K562 (cell line): ENCODE measurements at regions of chr12 and their contacts with region 1.

Region 1: GRCh38 chr12:95217377-95218149 is at the starts of genes FGD6 and VEZT:
- DNase-seq: peak; percentile 96 to 98 (median 97)
- ATAC-seq: peak; percentile 93
- H3K4me3 ChIP-seq: peak within 1 kb of the TSS; percentile 70
- H3K27ac ChIP-seq: peak within 1 kb of the TSS; percentile 81
- H3K4me1 ChIP-seq: peaks cover 8 to 14% of the 10 kb centered on the region in 2 experiments
- H3K27me3 ChIP-seq: no peaks in the 10 kb centered on the region
- CTCF ChIP-seq: peak; percentile 78 to 94 (median 82)
- EP300 ChIP-seq: no peak
- POLR2A ChIP-seq: peak; percentile 85
- RAD21 ChIP-seq: peak; percentile 90 to 99
- polyA plus RNA-seq, gene FGD6: 1.5 to 2.1 TPM
- polyA plus RNA-seq, gene VEZT: 16.1 to 29.1 TPM

Region 2: DNA sequence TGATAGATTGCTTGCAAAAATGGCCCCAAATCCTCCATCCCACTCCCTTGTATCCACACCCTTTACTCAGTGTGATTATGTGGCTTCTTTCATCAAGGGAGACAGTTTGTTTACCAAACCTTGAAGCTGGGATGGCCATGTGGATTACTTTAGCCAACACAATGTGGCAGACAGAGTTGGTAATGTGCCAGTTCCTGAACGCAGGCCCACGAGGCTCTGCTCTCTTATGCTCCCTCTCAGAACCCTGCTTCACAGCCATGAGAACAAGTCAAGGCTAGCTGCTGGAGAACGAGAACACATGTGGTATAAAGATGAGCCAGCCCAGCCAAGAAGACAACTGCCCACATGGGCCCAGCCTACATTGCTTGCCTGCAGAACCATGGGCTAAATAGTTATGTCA is 376.4 kb before region 1 on chr12:
- CTCF ChIA-PET with region 1: no interaction called
- POLR2A ChIA-PET with region 1: no interaction called
- in situ Hi-C with region 1: no loop called
- intact Hi-C with region 1: no loop called
- DNase-seq: no peak
- ATAC-seq: no peak
- H3K4me3 ChIP-seq: no peak overlapping the region
- H3K27ac ChIP-seq: no peak overlapping the region
- H3K4me1 ChIP-seq: no peaks in the 10 kb centered on the region
- H3K27me3 ChIP-seq: peaks cover 12 to 34% of the 10 kb centered on the region in 2 experiments
- CTCF ChIP-seq: no peak
- EP300 ChIP-seq: no peak
- POLR2A ChIP-seq: no peak
- RAD21 ChIP-seq: no peak

Region 3: DNA sequence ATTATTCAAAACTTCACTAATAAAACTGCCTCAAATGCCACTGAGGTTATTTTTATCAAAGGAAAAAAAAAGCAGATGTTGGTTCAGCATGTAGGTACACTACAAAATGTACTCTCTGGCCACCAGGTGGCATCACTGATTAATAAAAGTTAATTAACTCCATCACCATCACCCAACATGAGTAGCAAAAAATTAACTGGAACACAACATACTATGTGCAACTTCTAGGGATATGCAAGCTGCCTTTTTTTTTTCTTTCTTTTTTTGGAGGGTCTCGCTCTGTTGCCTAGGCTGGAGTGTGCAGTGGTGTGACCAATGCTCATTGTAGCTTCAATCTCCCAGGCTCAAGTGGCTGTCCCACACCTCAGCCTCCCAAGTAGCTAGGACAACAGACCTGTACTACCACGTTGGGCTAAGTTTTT is 100.4 kb before region 1 on chr12:
- CTCF ChIA-PET with region 1: interaction called, 32 read pairs
- POLR2A ChIA-PET with region 1: no interaction called
- in situ Hi-C with region 1: no loop called
- intact Hi-C with region 1: loop called (anchors 1 kb)
- DNase-seq: peak; percentile 54 to 84 (median 60)
- ATAC-seq: peak; percentile 97
- H3K4me3 ChIP-seq: no peak overlapping the region
- H3K27ac ChIP-seq: no peak overlapping the region
- H3K4me1 ChIP-seq: no peaks in the 10 kb centered on the region; a peak in 1 of 5 replicates
- H3K27me3 ChIP-seq: no peaks in the 10 kb centered on the region
- CTCF ChIP-seq: peak; percentile 52 to 78 (median 66); a peak in 5 of 6 replicates
- EP300 ChIP-seq: no peak
- POLR2A ChIP-seq: no peak
- RAD21 ChIP-seq: peak; percentile 94 to 97

Region 4: DNA sequence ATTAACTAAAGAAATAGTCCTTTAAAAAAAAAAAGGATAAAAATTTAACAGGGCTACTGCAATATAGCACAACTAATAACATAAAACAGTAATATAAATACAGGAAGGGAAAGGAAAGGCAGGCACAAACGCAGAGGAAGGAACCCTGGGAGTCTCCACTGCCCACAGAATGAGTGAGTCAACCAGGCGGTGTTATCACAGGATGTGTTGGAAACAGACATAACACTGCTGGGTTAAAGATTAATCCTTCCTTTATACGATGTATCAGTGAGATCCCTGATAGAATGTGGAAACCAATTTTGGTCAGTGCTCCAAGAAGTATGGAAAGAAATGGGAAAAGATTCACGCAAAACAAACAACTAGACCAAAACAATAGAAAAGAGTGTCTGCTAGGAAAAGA is 48.2 kb before region 1 on chr12:
- CTCF ChIA-PET with region 1: no interaction called
- POLR2A ChIA-PET with region 1: interaction called, 4 read pairs
- in situ Hi-C with region 1: no loop called
- intact Hi-C with region 1: loop called (anchors 10 kb)
- DNase-seq: peak; percentile 32 to 72 (median 44)
- ATAC-seq: peak; percentile 77
- H3K4me3 ChIP-seq: no peak overlapping the region
- H3K27ac ChIP-seq: peak overlapping the region; percentile 42; the same call in 2 of the 3 replicates
- H3K4me1 ChIP-seq: peaks cover 10 to 28% of the 10 kb centered on the region in 2 experiments; a peak in 3 of 5 replicates
- H3K27me3 ChIP-seq: no peaks in the 10 kb centered on the region
- CTCF ChIP-seq: no peak
- EP300 ChIP-seq: peak; percentile 62; the same call in 1 of the 2 replicates
- POLR2A ChIP-seq: no peak
- RAD21 ChIP-seq: no peak

Region 5: DNA sequence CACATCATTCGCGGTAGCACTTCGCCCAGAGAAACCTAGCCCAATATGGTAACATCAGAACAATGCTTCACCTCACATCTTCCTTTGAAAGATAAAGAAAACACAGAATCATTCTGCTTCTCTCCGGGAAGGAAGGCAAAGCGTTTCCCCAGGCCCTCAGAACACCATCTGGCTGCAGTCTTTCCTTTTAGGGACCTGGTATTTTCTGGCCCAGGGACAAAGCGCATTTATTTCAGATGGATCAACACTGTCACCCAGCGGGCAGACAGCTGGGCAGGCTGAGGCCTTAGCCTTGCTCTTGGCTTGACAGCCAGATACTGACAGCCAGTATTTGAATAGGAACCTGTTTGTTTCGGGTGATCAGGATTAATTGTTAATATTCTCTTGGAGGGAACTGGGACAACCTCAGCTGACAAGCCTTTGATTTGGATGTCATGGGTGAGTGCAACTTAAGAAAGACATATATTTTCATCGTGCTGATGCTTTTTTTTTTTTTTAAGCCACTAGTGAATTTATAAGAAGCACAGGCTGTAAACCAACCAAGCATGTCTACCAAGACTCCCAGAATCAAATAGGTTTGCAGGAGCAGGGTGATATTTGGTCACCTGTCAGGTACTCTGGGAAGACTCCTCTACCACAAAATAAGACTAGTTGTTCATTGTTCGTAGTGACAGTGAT is 119.0 kb after region 1 on chr12:
- CTCF ChIA-PET with region 1: no interaction called
- POLR2A ChIA-PET with region 1: no interaction called
- in situ Hi-C with region 1: no loop called
- intact Hi-C with region 1: loop called (anchors 5 kb)
- DNase-seq: peak in 3 of 4 experiments; percentile 10 to 57 (median 40)
- ATAC-seq: peak; percentile 87
- H3K4me3 ChIP-seq: no peak overlapping the region
- H3K27ac ChIP-seq: no peak overlapping the region
- H3K4me1 ChIP-seq: no peaks in the 10 kb centered on the region
- H3K27me3 ChIP-seq: peaks cover 5 to 10% of the 10 kb centered on the region in 2 experiments; a peak in 3 of 5 replicates
- CTCF ChIP-seq: peak; percentile 65 to 76 (median 73)
- EP300 ChIP-seq: no peak
- POLR2A ChIP-seq: no peak
- RAD21 ChIP-seq: peak; percentile 54 to 84

Region 6: GRCh38 chr12:95351748-95352147 is 134.2 kb after region 1 on chr12:
- CTCF ChIA-PET with region 1: no interaction called
- POLR2A ChIA-PET with region 1: no interaction called
- in situ Hi-C with region 1: no loop called
- intact Hi-C with region 1: no loop called
- DNase-seq: peak in 1 of 4 experiments; percentile 29
- ATAC-seq: peak; percentile 88
- H3K4me3 ChIP-seq: no peak overlapping the region
- H3K27ac ChIP-seq: no peak overlapping the region
- H3K4me1 ChIP-seq: no peaks in the 10 kb centered on the region; a peak in 1 of 5 replicates
- H3K27me3 ChIP-seq: peaks cover 26 to 37% of the 10 kb centered on the region in 2 experiments
- CTCF ChIP-seq: peak in 2 of 3 experiments; percentile 12 to 27; a peak in 1 of 6 replicates
- EP300 ChIP-seq: no peak
- POLR2A ChIP-seq: no peak
- RAD21 ChIP-seq: peak; percentile 22 to 44; a peak in 3 of 4 replicates

Region 7: GRCh38 chr12:95532851-95533250 is 315.3 kb after region 1 on chr12:
- CTCF ChIA-PET with region 1: interaction called, 3 read pairs
- POLR2A ChIA-PET with region 1: no interaction called
- in situ Hi-C with region 1: no loop called
- intact Hi-C with region 1: loop called (anchors 2 kb)
- DNase-seq: no peak
- ATAC-seq: peak; percentile 38; the same call in 1 of the 3 replicates
- H3K4me3 ChIP-seq: no peak overlapping the region
- H3K27ac ChIP-seq: no peak overlapping the region
- H3K4me1 ChIP-seq: no peaks in the 10 kb centered on the region
- H3K27me3 ChIP-seq: no peaks in the 10 kb centered on the region
- CTCF ChIP-seq: no peak
- EP300 ChIP-seq: no peak
- POLR2A ChIP-seq: no peak
- RAD21 ChIP-seq: no peak

Region 8: DNA sequence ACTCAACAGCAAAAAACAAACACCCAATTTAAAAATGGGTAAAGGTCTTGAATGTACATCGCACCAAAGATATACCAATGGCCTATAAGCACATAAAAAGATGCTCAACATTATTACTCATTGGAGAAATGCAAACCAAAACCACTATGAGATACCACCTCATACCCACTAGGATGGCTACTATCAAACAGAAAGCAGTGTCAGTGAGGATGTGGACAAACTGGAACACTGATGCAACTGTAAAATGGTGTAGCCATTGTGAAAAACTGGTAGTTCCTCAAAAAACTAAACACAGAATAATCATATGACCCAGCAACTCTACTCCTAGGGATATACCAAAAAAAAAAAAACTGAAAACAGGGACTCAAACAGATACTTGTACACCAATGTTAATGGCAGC is 1133.4 kb after region 1 on chr12:
- CTCF ChIA-PET with region 1: no interaction called
- POLR2A ChIA-PET with region 1: no interaction called
- in situ Hi-C with region 1: no loop called
- intact Hi-C with region 1: no loop called
- DNase-seq: no peak
- ATAC-seq: no peak; the same call in 1 of the 3 replicates
- H3K4me3 ChIP-seq: no peak overlapping the region
- H3K27ac ChIP-seq: no peak overlapping the region
- H3K4me1 ChIP-seq: no peaks in the 10 kb centered on the region; a peak in 2 of 5 replicates
- H3K27me3 ChIP-seq: no peaks in the 10 kb centered on the region
- CTCF ChIP-seq: no peak
- EP300 ChIP-seq: no peak
- POLR2A ChIP-seq: no peak
- RAD21 ChIP-seq: no peak